Activated CD8-positive, alpha-beta T cell treated with anti-CD3 and anti-CD28 coated beads, Interleukin-2, amount 10 ng/mL, durations not matched to agents 7 days and 5 days (primary cell): ENCODE measurements at regions of chr16 and their contacts with region 1.

Region 1: GRCh38 chr16:56964243-56965148 is 2.7 kb downstream of the CETP start:
- DNase-seq: peak; percentile 97
- ATAC-seq: peak; percentile 90
- H3K4me3 Mint-ChIP-seq: no peak overlapping the region
- H3K27ac Mint-ChIP-seq: peak overlapping the region; percentile 68
- H3K4me1 Mint-ChIP-seq: peaks cover 22% of the 10 kb centered on the region
- H3K27me3 Mint-ChIP-seq: peaks cover 2% of the 10 kb centered on the region

Region 2: GRCh38 chr16:56860226-56861020 is 104.1 kb before region 1 on chr16:
- CTCF ChIA-PET with region 1: interaction called, 12 read pairs
- POLR2A ChIA-PET with region 1: no interaction called
- DNase-seq: peak; percentile 75
- ATAC-seq: peak; percentile 84
- H3K4me3 Mint-ChIP-seq: peak overlapping the region; percentile 63
- H3K27ac Mint-ChIP-seq: peak overlapping the region; percentile 93
- H3K4me1 Mint-ChIP-seq: peaks cover 56% of the 10 kb centered on the region
- H3K27me3 Mint-ChIP-seq: no peaks in the 10 kb centered on the region

Region 3: DNA sequence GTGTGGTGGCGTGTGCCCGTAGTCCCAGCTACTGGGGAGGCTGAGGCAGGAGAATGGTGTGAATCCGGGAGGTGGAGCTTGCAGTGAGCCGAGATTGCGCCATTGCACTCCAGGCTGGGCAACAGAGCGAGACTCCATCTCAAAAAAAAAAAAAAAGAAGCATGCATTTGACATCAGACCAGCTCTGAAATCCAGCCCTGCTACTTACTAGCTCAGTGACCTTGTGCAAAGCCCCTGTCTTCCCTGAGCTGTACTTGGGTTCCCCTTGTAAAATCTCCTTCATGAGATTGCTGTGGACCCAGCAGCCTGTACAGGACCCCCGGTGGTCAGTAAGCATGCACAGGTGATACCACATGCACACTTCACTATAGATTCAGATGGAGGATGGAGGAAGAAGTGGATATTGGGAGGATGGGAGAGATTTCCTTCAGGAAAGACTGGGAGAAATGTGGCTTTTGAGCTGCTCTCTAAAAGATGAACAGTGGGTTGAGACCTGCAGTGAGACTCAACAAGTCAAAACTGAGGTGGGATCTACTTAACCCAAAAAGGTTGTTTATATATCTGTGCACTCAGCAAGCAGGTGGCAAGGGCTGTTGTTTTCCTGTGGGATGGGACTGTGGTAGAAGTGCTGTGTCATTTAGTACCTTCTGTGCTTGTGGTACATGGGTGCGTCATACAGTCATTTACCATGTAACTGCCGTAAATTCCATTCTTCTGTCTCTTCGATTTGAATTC is 25.9 kb before region 1 on chr16:
- CTCF ChIA-PET with region 1: interaction called, 14 read pairs
- POLR2A ChIA-PET with region 1: interaction called, 3 read pairs
- DNase-seq: peak; percentile 73
- ATAC-seq: peak; percentile 70
- H3K4me3 Mint-ChIP-seq: peak overlapping the region; percentile 57
- H3K27ac Mint-ChIP-seq: peak overlapping the region; percentile 75
- H3K4me1 Mint-ChIP-seq: peaks cover 72% of the 10 kb centered on the region
- H3K27me3 Mint-ChIP-seq: no peaks in the 10 kb centered on the region

Region 4: DNA sequence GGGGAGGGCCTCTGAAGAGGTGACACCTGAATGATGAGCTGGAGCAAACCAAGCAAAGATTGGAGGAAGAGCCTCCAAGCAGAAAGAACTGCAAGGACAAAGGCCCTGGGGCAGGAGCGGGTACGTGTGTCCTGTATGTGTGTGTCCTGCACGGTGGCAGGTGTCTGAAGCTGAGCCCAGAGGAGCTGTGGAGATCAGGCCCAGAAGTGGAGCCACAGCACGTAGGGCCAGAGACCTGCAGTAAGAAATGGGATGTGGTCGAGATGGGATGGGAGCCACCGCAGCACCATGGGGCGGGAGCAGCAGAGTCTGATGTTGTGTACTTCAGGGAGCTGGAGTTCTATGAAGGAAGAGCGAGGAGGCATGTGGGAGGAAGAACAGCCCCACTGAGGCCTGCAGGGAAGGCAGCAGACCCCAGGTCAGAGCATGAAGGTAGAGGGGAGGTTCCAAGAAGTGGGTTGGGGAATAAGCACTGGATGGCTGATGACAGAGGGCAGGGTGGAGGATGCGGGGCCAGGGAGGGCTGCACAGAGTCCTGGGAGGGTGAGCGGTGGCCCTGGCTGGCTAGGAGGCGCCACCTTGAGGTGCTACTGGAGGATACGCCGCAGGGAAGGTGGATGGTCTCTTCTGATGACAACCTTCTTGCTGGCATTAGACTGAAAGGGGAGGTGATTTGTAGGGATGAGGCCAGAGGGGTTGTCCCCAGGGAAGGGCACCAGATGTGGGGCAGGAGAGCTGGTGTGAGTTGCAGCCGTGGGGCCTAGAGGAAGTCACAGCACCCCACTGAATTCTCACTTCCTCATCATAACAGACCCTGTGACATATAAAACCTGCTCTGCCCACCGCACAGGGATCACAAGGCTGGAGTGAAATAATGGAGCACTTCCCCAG is 13.4 kb before region 1 on chr16:
- CTCF ChIA-PET with region 1: interaction called, 63 read pairs
- POLR2A ChIA-PET with region 1: no interaction called
- DNase-seq: peak; percentile 75
- ATAC-seq: peak; percentile 82
- H3K4me3 Mint-ChIP-seq: no peak overlapping the region
- H3K27ac Mint-ChIP-seq: peak overlapping the region; percentile 18
- H3K4me1 Mint-ChIP-seq: peaks cover 16% of the 10 kb centered on the region
- H3K27me3 Mint-ChIP-seq: peaks cover under 1% of the 10 kb centered on the region

Region 5: GRCh38 chr16:56988948-56989945 is 24.8 kb after region 1 on chr16 and contains the start of gene NLRC5:
- CTCF ChIA-PET with region 1: interaction called, 107 read pairs
- POLR2A ChIA-PET with region 1: interaction called, 21 read pairs
- DNase-seq: peak; percentile 95
- ATAC-seq: peak; percentile 83
- H3K4me3 Mint-ChIP-seq: peak within 1 kb of the TSS; percentile 100
- H3K27ac Mint-ChIP-seq: peak within 1 kb of the TSS; percentile 99
- H3K4me1 Mint-ChIP-seq: peaks cover 64% of the 10 kb centered on the region
- H3K27me3 Mint-ChIP-seq: no peaks in the 10 kb centered on the region
- total RNA-seq, gene NLRC5: 280 to 291 TPM

Region 6: GRCh38 chr16:57023541-57024249 is 59.2 kb after region 1 on chr16:
- CTCF ChIA-PET with region 1: interaction called, 41 read pairs
- POLR2A ChIA-PET with region 1: interaction called, 3 read pairs
- DNase-seq: peak; percentile 76
- ATAC-seq: peak; percentile 81
- H3K4me3 Mint-ChIP-seq: peak overlapping the region; percentile 41
- H3K27ac Mint-ChIP-seq: peak overlapping the region; percentile 73
- H3K4me1 Mint-ChIP-seq: peaks cover 82% of the 10 kb centered on the region
- H3K27me3 Mint-ChIP-seq: no peaks in the 10 kb centered on the region

Region 7: DNA sequence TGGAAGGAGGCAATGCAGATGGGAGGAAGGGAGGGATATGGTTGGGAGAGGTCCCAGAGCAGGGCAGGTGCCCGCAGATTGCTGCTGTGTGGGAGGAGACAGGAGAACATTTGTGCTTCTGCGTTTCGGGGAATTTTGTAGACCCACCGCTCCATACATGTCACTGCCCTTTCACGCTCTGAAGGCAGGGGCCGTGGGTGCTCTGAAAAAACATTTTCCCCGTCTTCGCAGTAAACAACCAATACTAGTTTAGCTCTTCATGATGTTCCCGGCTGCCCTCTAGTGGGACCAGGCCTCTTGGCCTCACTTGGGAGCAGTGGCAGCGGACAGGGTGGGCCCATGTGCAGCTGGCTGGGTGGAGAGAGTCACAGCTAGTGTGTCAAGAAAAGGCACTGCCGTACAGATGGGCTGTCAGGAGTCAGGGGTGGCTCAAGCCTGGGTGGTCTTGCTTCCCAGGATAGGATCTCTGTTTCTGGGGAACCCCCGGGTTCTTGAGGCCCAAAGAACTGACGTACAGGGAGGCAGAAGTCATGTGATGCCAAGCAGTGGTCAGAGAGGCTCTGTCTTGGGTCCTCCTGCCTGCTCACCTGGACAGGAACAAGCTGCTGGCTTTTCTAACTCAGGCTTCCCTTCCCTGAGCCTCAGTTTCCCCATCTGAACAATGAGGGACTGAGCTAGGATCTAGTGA is 81.3 kb after region 1 on chr16:
- CTCF ChIA-PET with region 1: interaction called, 89 read pairs
- POLR2A ChIA-PET with region 1: interaction called, 25 read pairs
- DNase-seq: peak; percentile 50
- ATAC-seq: no peak
- H3K4me3 Mint-ChIP-seq: no peak overlapping the region
- H3K27ac Mint-ChIP-seq: peak overlapping the region; percentile 70
- H3K4me1 Mint-ChIP-seq: peaks cover 47% of the 10 kb centered on the region
- H3K27me3 Mint-ChIP-seq: no peaks in the 10 kb centered on the region